HCT116 (cell line): ENCODE measurements at regions of chr18 and their contacts with region 1.

Region 1: GRCh38 chr18:50866765-50867164 is 12.2 kb upstream of the ME2 start:
- DNase-seq: no peak
- ATAC-seq: peak; percentile 45; the same call in 1 of the 2 replicates
- H3K4me3 ChIP-seq: no peak overlapping the region
- H3K27ac ChIP-seq: no peak overlapping the region
- H3K4me1 ChIP-seq: peaks cover 25 to 39% of the 10 kb centered on the region in 2 experiments
- H3K27me3 ChIP-seq: no peaks in the 10 kb centered on the region
- CTCF ChIP-seq: peak; percentile 17 to 40 (median 35); a peak in 3 of 6 replicates
- POLR2A ChIP-seq: no peak
- RAD21 ChIP-seq: peak; percentile 59

Region 2: GRCh38 chr18:50126471-50126870 is 740.3 kb before region 1 on chr18:
- CTCF ChIA-PET with region 1: no interaction called
- POLR2A ChIA-PET with region 1: no interaction called
- RAD21 ChIA-PET with region 1: no interaction called
- intact Hi-C with region 1: no loop called
- DNase-seq: no peak
- ATAC-seq: no peak
- H3K4me3 ChIP-seq: no peak overlapping the region
- H3K27ac ChIP-seq: no peak overlapping the region
- H3K4me1 ChIP-seq: peaks cover 0 to 10% of the 10 kb centered on the region in 2 experiments; a peak in 2 of 4 replicates
- H3K27me3 ChIP-seq: no peaks in the 10 kb centered on the region
- CTCF ChIP-seq: no peak
- POLR2A ChIP-seq: no peak
- RAD21 ChIP-seq: no peak

Region 3: GRCh38 chr18:50878345-50879301 is 11.9 kb after region 1 on chr18 and contains the start of gene ME2:
- CTCF ChIA-PET with region 1: interaction called, 3 read pairs
- POLR2A ChIA-PET with region 1: interaction called, 14 read pairs
- RAD21 ChIA-PET with region 1: no interaction called
- intact Hi-C with region 1: no loop called
- DNase-seq: peak; percentile 61
- ATAC-seq: peak; percentile 96
- H3K4me3 ChIP-seq: peak within 1 kb of the TSS; percentile 72 to 73
- H3K27ac ChIP-seq: peak within 1 kb of the TSS; percentile 81
- H3K4me1 ChIP-seq: peaks cover 10 to 24% of the 10 kb centered on the region in 2 experiments
- H3K27me3 ChIP-seq: no peaks in the 10 kb centered on the region
- CTCF ChIP-seq: no peak
- POLR2A ChIP-seq: peak; percentile 88
- RAD21 ChIP-seq: no peak
- total RNA-seq, gene ME2: 49.0 TPM